ENCODE measurements at regions of chrX and their contacts with region 1.

Region 1: DNA sequence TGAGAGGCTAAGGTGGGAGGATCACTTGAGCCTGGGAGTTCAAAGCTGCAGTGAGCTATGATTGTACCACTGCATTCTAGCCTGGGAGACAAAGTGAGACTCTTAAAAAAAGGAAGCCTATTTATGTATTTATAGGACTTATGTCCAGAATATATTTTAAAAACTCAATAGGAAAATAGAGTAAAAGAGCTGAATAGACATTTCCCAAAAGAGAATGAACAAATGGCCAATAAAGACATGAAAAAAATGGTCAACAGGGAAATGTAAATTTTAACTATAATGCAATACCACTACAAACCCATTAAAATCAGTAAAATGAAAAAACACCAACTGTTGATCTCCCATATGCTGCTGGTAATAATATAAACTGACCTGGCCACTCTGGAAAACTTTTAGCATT is 115.0 kb downstream of the HUWE1 start:
- DNase-seq: no peak
- ATAC-seq: no peak

Region 2: DNA sequence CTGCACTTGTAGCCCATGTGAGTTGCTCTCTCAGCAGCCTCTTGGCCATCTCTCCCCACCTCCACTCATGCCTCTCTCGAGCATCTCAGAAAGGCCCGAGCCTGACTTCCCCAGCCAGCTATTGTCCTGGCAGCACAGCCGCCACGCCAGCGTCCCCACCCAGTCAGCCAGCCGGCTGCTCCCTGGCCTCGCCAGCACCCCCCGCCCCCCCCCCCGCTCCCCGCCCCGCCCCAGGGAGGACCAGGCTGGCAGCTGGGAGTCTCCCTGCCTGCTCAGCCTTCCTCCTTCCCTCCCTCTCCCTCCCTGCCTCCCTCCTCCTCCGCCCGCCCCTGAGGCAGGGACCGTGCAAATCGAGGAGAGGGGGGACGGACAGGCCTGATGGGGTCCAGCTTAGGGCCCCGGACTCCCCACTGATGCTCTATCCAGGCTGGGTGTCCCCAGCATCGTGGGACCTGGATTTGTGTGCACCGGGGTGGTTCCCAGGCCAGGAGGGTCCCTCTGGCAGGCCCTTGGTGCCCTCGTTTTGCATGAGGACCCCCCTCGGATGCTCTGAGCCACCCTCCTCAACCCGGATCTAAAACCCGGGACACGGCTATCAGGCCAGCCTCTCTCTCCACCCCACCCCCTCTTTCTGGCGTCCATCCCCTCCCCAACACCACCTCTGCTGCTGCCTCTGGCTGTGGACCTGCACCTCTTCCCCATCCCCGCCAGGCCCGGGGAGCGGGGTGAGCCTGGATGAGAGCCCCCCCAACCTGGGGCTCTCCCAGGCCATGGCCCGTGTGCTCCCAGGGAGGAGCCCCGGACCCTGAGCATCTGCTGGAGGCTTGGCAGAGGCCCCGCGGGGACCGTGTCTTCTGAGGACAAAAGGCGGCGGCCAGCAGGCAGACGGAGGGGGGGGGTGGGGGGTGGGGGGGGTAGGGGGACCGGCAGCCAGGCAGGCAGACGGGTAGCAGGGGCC is 523.0 kb before region 1 on chrX and contains the start of gene GPR173:
- intact Hi-C with region 1: no loop called
- DNase-seq: peak; percentile 67
- ATAC-seq: peak; percentile 93
- total RNA-seq, gene GPR173: 0.67 TPM

Region 3: GRCh38 chrX:53621418-53621986 is 50.0 kb after region 1 on chrX:
- intact Hi-C with region 1: loop called (anchors 10 kb)
- DNase-seq: no peak
- ATAC-seq: no peak

Measured in Right ventricle myocardium superior (tissue), 1 donor.